HAP-1 (cell line): ENCODE measurements at regions of chr18 and their contacts with region 1.

Region 1: DNA sequence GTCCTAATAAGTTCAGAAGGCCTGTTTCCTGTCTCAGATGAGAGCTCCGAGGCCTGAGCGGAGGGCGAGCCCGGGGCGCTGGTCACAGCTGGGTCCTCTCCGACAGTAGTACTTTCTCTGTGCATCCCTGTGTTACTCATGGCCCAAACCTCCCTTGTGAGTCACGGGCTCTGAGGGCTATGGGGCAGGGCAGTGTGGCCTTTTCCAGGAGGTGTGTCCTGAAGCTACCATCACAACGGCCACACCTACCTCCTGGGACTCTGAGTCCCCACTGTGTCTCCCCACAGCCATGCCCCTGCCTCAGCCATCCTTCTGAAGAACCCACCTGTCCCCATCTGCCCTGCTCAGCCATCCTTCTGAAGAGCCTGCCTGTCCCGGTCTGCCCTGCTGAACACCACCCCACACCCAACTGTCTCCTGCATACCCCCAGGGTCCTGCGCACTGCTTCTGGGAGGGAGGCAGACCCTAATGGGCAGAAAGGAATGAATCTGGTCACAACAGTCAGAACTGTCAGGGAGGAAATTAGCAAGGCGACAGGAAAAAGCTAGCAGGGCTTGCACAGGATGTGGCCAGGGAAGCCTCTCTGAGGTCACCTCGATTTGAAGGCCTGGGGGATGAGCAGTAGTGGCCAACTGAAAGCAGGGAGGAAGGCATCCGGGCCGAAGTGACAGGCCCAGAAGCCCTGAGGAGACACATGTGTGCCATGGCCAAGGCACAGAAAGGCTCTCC is 145.4 kb upstream of the RIOK3 start:
- DNase-seq: no peak
- H3K4me3 ChIP-seq: no peak overlapping the region
- H3K4me1 ChIP-seq: no peaks in the 10 kb centered on the region
- H3K27me3 ChIP-seq: no peaks in the 10 kb centered on the region

Region 2: DNA sequence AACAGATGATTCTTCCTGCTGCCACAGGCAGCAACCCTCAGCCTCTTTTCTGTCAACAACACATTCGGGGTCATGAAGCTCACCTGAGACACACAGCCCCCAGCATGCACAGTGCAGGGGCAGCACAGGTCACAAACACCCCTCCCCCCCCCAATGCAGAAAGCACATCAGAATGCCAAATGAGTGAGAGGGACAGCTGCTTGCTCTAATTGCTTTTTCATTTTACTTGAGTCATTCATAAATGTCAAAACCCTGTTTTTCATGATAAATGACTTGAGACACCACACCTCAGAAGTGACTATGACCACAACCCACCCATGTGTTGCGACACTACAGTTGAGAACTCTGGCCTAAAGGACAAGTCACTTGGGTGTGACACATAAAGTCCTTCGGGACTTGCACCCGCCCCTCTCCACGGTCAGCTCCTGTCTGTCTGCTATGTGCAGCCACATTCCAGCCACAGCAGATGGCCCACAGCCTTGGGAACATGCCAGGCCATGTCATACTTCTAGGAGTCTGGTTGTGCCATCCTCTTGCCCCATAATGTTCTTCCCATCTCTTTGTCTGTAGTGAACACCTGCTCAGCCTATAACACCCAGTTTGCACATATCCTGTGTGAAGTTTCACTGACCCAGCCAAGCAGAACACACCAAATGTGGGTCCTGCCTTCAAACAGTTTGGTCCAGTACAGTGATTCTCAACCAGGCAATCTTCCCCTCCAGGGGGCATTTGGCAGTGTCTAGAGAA is 115.1 kb after region 1 on chr18:
- in situ Hi-C with region 1: loop called (anchors 25 kb)
- DNase-seq: no peak
- H3K4me3 ChIP-seq: no peak overlapping the region
- H3K4me1 ChIP-seq: no peaks in the 10 kb centered on the region
- H3K27me3 ChIP-seq: no peaks in the 10 kb centered on the region